ENCODE measurements at regions of chr12 and their contacts with region 1.

Region 1: DNA sequence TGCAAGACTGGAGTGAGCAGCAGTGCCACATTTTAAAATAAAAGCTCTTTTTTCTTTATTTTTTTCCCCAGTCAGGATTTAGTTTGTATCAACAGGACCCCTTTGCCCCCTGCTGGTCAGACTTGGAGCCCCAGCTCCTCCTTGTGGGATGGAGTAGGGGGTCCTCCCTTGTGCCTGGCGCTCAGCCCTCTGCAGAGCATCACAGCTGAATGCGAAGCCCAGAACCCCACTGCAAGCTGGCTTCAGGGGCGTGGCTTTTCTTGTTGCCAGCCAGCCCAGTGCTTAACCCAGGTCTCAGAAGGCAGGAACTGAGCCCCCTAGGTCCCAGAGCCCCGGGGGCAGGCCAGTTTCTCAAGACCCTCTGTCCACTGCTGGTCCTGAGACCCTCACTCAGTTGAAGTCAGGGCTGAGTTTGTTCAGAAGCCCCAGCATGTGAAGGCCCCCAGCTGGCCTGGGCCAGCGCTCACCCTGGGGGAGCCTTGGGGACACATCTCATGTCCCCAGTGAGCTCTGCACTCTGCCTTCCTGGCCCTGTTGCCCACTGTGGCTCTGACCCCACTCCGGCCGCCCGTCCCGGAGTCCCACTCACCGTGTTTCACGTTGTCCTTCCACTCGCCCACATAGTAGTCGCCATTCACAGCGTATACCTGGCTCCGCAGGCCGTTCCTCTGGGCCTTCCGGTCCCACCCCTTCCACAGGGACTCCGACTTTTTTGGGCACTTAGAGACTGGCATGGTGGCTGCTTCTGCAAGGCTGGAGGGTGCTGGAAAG is 519 bp downstream of the MORN3 start:
- DNase-seq: peak; percentile 36 to 62 (median 48)
- H3K4me3 ChIP-seq: no peak overlapping the region
- H3K4me3 Mint-ChIP-seq: peak overlapping the region in 4 of 8 donors; percentile 21 to 62 (median 46)
- H3K27ac ChIP-seq: no peak overlapping the region
- H3K27ac Mint-ChIP-seq: peak overlapping the region; percentile 70 to 91 (median 84)
- H3K4me1 ChIP-seq: peaks cover 62% of the 10 kb centered on the region
- H3K4me1 Mint-ChIP-seq: peaks cover 26 to 71% (median 48%) of the 10 kb centered on the region in 4 donors
- H3K27me3 ChIP-seq: no peaks in the 10 kb centered on the region
- H3K27me3 Mint-ChIP-seq: no peaks in the 10 kb centered on the region

Region 2: DNA sequence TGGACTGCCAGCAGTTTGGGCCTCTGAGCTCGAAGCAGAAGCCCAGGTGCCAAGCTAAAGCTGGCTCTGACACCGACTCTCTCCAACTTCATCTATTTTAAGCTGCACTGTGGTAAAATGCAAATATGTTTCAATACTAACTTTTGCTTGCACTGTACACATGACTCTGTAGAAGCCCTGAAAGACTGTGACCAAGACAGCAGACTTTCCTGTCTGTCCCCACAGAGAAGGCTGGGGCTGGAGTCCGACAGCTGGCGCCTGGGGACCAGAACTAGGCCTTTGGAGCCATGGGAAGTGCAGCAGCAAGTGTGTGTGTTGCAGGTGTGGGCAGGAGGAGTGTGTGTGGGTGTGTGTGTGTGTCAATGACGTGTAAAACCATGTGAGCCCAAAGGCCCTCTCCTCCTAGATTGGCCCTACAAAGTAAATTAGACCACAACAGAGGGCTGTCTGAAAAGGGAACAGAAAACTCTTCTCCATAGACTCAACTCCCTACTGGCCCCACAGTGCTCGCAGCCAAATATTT is 1536.0 kb before region 1 on chr12:
- CTCF ChIA-PET with region 1: no interaction called
- POLR2A ChIA-PET with region 1: no interaction called
- intact Hi-C with region 1: no loop called
- DNase-seq: no peak
- H3K4me3 ChIP-seq: no peak overlapping the region
- H3K4me3 Mint-ChIP-seq: no peak overlapping the region
- H3K27ac ChIP-seq: no peak overlapping the region
- H3K27ac Mint-ChIP-seq: peak overlapping the region in 1 of 7 donors; percentile 8
- H3K4me1 ChIP-seq: no peaks in the 10 kb centered on the region
- H3K4me1 Mint-ChIP-seq: no peaks in the 10 kb centered on the region
- H3K27me3 ChIP-seq: no peaks in the 10 kb centered on the region
- H3K27me3 Mint-ChIP-seq: no peaks in the 10 kb centered on the region

Region 3: GRCh38 chr12:121399391-121400331 is 269.3 kb before region 1 on chr12 and contains the start of gene RNF34:
- CTCF ChIA-PET with region 1: no interaction called
- POLR2A ChIA-PET with region 1: interaction called, 12 read pairs
- intact Hi-C with region 1: loop called (anchors 10 kb)
- DNase-seq: peak; percentile 96 to 98 (median 97)
- H3K4me3 ChIP-seq: peak within 1 kb of the TSS; percentile 25 to 78
- H3K4me3 Mint-ChIP-seq: peak within 1 kb of the TSS; percentile 89 to 99 (median 94)
- H3K27ac ChIP-seq: peak within 1 kb of the TSS; percentile 87
- H3K27ac Mint-ChIP-seq: peak within 1 kb of the TSS; percentile 95 to 98 (median 96)
- H3K4me1 ChIP-seq: peaks cover 42% of the 10 kb centered on the region
- H3K4me1 Mint-ChIP-seq: peaks cover 21 to 47% (median 32%) of the 10 kb centered on the region in 4 donors
- H3K27me3 ChIP-seq: no peaks in the 10 kb centered on the region
- H3K27me3 Mint-ChIP-seq: no peaks in the 10 kb centered on the region
- total RNA-seq, gene RNF34: 88.6 to 95.3 TPM

Region 4: GRCh38 chr12:121536899-121537813 is 131.8 kb before region 1 on chr12:
- CTCF ChIA-PET with region 1: no interaction called
- POLR2A ChIA-PET with region 1: interaction called, 13 read pairs
- intact Hi-C with region 1: loop called (anchors 5 kb)
- DNase-seq: peak; percentile 46 to 75 (median 48)
- H3K4me3 ChIP-seq: peak overlapping the region; percentile 29 to 55
- H3K4me3 Mint-ChIP-seq: peak overlapping the region; percentile 62 to 86 (median 82)
- H3K27ac ChIP-seq: peak overlapping the region; percentile 80
- H3K27ac Mint-ChIP-seq: peak overlapping the region; percentile 95 to 99 (median 95)
- H3K4me1 ChIP-seq: peaks cover 57% of the 10 kb centered on the region
- H3K4me1 Mint-ChIP-seq: peaks cover 29 to 69% (median 48%) of the 10 kb centered on the region in 4 donors
- H3K27me3 ChIP-seq: no peaks in the 10 kb centered on the region
- H3K27me3 Mint-ChIP-seq: no peaks in the 10 kb centered on the region

Region 5: DNA sequence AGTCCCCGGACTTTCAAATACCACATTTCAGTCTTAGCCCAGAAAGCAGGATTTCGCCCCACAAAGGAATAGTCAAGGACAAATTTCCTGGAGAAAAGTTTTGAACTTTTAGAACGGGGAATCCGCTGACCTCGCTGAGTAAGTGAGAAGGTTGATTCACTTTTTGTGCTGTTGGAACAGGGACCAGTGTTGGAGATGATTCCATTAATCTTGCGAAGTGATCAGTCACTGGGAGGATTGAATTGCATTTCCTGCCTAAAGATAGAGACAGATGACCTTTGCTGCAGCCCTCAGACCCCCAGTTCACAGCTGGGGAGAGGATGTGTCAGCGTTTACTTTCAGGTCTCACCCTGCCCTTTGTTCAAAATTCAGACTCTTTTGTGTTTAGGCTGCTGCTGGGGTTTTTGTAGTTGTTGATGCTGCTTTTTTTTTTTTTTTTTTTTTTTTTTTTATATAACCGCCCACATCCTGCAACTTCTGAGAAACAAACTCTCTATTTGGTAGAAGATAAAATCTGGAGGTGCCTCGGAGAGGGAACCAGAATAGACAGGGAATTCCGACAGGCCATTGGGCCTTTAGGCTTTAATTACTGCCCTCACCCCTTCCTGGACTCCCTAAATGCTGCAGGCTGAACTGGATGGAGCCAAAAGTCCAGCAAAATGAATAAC is 78.3 kb before region 1 on chr12:
- CTCF ChIA-PET with region 1: interaction called, 3 read pairs
- POLR2A ChIA-PET with region 1: interaction called, 36 read pairs
- intact Hi-C with region 1: no loop called
- DNase-seq: peak; percentile 84 to 86 (median 85)
- H3K4me3 ChIP-seq: peak overlapping the region; percentile 42 to 62
- H3K4me3 Mint-ChIP-seq: peak overlapping the region; percentile 87 to 94 (median 92)
- H3K27ac ChIP-seq: peak overlapping the region; percentile 97
- H3K27ac Mint-ChIP-seq: peak overlapping the region; percentile 94 to 100 (median 99)
- H3K4me1 ChIP-seq: peaks cover 52% of the 10 kb centered on the region
- H3K4me1 Mint-ChIP-seq: peaks cover 23 to 49% (median 35%) of the 10 kb centered on the region in 4 donors
- H3K27me3 ChIP-seq: no peaks in the 10 kb centered on the region
- H3K27me3 Mint-ChIP-seq: no peaks in the 10 kb centered on the region

Region 6: DNA sequence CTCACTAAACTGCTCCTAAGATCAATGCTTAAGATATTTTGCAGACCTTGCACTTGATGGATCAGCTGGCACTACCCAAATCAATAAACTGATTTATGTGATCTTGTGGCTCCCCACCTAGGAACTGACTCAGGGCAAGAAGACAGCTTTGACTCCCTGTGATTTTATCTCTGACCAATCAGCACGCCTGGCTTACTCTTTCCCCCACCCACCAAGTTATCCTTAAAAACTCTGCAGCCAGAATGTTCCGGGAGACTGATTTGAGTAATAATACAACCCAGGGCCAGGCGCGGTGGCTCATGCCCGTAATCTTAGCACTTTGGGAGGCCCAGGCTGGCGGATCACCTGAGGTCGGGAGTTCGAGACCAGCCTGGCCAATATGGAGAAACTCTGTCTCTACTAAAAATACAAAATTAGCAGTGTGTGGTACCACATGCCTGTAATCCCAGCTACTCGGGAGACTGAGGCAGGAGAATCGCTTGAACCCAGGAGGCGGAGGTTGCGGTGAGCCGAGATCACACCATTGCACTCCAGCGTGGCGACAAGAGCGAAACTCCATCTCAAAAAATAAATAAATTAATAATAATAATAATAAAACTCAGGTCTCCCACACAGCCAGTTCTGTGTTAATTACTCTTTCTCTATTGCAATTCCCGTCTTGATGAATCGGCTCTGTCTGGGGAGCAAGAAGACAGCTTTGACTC is 11.5 kb before region 1 on chr12:
- CTCF ChIA-PET with region 1: interaction called, 74 read pairs
- POLR2A ChIA-PET with region 1: interaction called, 115 read pairs
- intact Hi-C with region 1: loop called (anchors 1 kb)
- DNase-seq: no peak
- H3K4me3 ChIP-seq: no peak overlapping the region
- H3K4me3 Mint-ChIP-seq: peak overlapping the region; percentile 8 to 94 (median 62)
- H3K27ac ChIP-seq: no peak overlapping the region
- H3K27ac Mint-ChIP-seq: peak overlapping the region; percentile 78 to 100 (median 99)
- H3K4me1 ChIP-seq: peaks cover 56% of the 10 kb centered on the region
- H3K4me1 Mint-ChIP-seq: peaks cover 41 to 77% (median 55%) of the 10 kb centered on the region in 4 donors
- H3K27me3 ChIP-seq: no peaks in the 10 kb centered on the region
- H3K27me3 Mint-ChIP-seq: no peaks in the 10 kb centered on the region

Region 7: DNA sequence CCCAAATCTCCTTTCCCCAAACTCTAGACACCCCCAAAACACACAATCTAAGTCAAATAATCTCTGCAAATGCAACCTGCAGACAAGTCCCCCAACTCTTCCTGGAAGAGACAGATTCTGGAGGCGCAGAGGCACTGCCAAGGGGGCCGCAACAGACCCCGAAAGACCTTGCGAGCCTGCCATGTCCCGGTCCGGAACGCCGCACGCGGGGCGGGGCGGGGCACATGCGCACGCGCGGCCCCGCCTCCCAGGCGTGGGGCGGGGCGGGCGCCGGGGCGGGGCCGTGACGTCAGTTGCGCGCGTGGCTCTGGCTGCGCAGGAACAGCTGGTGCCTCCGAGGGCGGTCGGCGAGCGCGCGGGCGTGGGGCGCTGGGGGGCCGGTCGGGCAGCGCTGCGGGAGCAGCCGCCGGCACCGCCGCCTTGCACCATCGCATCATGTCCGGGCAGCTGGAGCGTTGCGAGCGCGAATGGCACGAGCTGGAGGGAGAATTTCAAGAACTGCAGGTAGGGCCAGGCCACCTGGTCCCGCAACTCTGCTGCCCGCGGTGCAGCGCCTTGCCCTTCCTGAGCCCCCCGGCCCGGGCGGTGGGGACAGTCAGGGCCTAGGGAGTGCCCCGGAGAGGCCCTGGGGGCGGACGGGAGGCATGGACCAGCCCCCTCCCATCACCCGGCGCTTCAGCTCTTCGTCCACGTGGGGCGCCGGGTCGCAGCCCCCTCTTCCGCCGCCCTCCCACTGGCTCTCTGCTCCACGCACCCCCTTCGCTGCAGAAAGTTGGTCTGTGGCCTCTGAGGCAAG is 43.7 kb after region 1 on chr12 and contains the start of gene TMEM120B:
- CTCF ChIA-PET with region 1: no interaction called
- POLR2A ChIA-PET with region 1: no interaction called
- intact Hi-C with region 1: loop called (anchors 1 kb)
- DNase-seq: peak; percentile 78 to 89 (median 84)
- H3K4me3 ChIP-seq: peak within 1 kb of the TSS; percentile 57 to 93
- H3K4me3 Mint-ChIP-seq: peak within 1 kb of the TSS; percentile 91 to 98 (median 96)
- H3K27ac ChIP-seq: peak within 1 kb of the TSS; percentile 63
- H3K27ac Mint-ChIP-seq: peak within 1 kb of the TSS; percentile 85 to 97 (median 95)
- H3K4me1 ChIP-seq: peaks cover 16% of the 10 kb centered on the region
- H3K4me1 Mint-ChIP-seq: peaks cover 7 to 26% (median 17%) of the 10 kb centered on the region in 4 donors
- H3K27me3 ChIP-seq: no peaks in the 10 kb centered on the region
- H3K27me3 Mint-ChIP-seq: no peaks in the 10 kb centered on the region
- total RNA-seq, gene TMEM120B: 11.3 to 12.8 TPM

Measured in CD4-positive, alpha-beta memory T cell (primary cell).